Panc1 (cell line): ENCODE measurements at regions of chr4 and their contacts with region 1.

Region 1: DNA sequence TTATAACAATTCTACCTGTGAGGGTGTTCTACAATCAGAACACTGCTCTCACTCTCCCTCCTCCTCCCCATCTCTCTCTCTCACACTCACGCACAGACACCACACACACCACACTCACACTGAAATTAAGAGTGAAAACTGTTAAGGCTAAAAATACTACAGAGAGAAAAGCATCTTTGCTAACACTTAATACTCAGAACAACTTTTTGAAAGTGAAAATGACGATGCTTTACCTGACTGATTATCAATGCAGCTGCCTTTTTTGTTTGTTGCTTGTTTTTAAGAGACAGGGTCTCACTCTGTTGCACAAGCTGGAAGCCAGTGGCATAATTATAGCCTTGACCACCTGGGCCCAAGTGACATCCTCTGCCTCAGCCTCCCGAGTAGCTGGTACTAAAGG is 222.4 kb downstream of the APBB2 start:
- DNase-seq: no peak
- ATAC-seq: no peak
- H3K4me3 ChIP-seq: no peak overlapping the region
- H3K27ac ChIP-seq: no peak overlapping the region
- H3K4me1 ChIP-seq: no peaks in the 10 kb centered on the region
- H3K27me3 ChIP-seq: no peaks in the 10 kb centered on the region
- CTCF ChIP-seq: no peak

Region 2: GRCh38 chr4:40865696-40866095 is 126.2 kb before region 1 on chr4:
- CTCF ChIA-PET with region 1: no interaction called
- POLR2A ChIA-PET with region 1: no interaction called
- in situ Hi-C with region 1: no loop called
- intact Hi-C with region 1: no loop called
- DNase-seq: no peak
- ATAC-seq: no peak
- H3K4me3 ChIP-seq: no peak overlapping the region
- H3K27ac ChIP-seq: no peak overlapping the region
- H3K4me1 ChIP-seq: no peaks in the 10 kb centered on the region
- H3K27me3 ChIP-seq: no peaks in the 10 kb centered on the region
- CTCF ChIP-seq: no peak

Region 3: GRCh38 chr4:41245983-41246382 is 254.1 kb after region 1 on chr4:
- CTCF ChIA-PET with region 1: no interaction called
- POLR2A ChIA-PET with region 1: interaction called, 10 read pairs
- in situ Hi-C with region 1: no loop called
- intact Hi-C with region 1: no loop called
- DNase-seq: no peak
- ATAC-seq: no peak
- H3K4me3 ChIP-seq: no peak overlapping the region
- H3K27ac ChIP-seq: no peak overlapping the region
- H3K4me1 ChIP-seq: no peaks in the 10 kb centered on the region
- H3K27me3 ChIP-seq: no peaks in the 10 kb centered on the region
- CTCF ChIP-seq: no peak